GM10248 (cell line): ENCODE measurements at regions of chr16 and their contacts with region 1.

Region 1: DNA sequence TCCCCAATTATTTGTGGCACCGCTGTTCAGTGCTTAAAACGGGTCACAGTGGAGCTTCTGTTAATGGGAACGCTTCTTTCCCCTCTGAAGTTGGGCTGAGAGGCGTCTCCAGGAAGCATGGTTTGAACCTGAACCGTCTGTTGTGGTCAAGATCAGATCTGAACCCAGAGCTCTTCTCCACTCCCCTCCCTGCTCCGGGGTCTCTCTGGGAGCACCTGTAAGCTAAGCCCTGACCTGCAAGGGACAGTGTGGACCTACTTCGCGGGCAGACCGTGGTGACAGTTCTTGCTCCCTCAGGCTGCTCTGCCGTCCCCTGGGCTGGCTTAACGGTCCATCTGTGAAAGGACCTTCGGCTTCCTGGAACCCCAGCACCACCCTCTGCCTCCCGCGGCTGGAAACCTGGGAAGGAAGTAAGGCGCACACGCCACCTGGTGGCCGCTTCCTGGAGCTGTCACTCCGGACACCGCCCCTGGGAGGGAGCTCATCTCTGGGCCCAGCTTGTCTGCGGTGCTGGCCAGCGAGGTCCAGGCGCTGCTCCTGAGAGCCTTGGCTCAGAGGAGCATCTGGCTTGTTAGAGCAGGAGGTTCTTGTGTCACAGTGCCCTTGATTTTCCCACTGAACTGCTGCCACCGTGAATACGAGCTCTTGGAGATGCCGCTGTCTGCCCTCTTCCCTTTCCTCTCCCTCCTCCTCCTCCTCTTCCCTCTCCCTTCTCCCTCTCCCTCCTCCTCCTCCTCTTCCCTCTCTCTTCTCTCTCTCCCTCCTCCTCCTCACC is 518.5 kb upstream of the EEF2KMT start:
- DNase-seq: peak; percentile 59
- CTCF ChIP-seq: peak; percentile 63

Region 2: DNA sequence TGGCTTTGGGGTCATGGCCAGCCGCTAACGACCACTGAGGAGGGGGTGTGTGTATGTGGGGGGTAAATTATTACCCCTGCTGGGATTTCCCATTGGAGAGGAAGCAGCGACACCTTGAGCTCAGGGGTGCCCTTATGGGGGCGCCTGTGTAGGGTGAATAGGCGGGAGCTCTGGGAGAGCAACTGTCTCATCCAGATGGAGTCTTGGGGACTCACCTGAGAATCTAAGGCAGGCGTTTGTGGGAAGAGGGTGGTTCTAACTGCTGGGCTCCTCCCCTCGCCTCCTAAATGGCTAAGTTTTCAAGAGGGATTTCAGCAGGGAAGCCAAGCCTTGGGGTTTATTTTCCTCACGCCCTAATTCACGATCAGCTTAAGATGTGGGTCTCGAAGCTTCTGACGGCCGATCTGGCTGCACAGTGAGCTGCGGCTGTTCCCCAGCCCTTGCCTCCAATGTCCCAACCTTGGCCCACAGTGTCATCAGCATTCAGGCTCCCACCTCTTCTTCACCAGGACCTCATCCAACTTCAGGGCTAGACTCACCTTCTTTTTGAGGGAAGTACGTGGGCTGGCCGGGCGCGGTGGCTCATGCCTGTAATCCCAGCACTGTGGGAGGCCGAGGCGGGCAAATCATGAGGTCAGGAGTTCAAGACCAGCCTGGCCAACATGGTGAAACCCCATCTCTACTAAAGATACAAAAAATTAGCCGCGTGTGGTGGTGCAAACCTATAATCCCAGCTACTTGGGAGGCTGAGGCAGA is 381.6 kb before region 1 on chr16:
- CTCF ChIA-PET with region 1: interaction called, 17 read pairs
- POLR2A ChIA-PET with region 1: no interaction called
- DNase-seq: no peak
- CTCF ChIP-seq: no peak

Region 3: GRCh38 chr16:5633845-5634440 is 17.9 kb after region 1 on chr16:
- CTCF ChIA-PET with region 1: interaction called, 48 read pairs
- POLR2A ChIA-PET with region 1: no interaction called
- DNase-seq: peak; percentile 46
- CTCF ChIP-seq: peak; percentile 35

Region 4: GRCh38 chr16:5722116-5722619 is 106.1 kb after region 1 on chr16:
- CTCF ChIA-PET with region 1: no interaction called
- POLR2A ChIA-PET with region 1: no interaction called
- DNase-seq: no peak
- CTCF ChIP-seq: no peak